Dendritic cell treated with granulocyte-macrophage colony-stimulating factor and Interleukin-4, amounts not matched to agents 40 ng/mL and 50 ng/mL, for 4 days (primary cell): ENCODE measurements at regions of chr5 and their contacts with region 1.

Region 1: DNA sequence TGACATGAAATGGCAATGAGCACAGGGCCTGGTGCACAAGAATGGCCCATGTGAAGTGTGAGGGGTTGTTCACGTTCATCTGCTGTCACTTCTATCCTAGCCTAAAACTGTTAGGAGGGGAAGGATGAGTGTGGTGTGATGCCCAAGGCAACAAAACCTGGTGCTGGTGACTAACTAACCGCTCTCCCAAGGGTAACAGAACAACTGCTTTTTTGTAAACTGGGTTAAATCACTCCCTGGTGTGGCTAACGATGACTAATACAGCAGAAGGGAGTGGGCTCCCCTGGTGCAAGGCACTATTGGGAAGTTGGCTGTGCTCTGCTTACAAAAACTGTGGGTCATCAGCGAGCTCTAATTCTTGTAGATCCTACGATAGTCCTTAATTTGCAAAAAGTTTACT is 103.2 kb upstream of the VCAN start:
- H3K4me3 Mint-ChIP-seq: peak overlapping the region; percentile 11
- H3K27ac Mint-ChIP-seq: peak overlapping the region; percentile 75
- H3K4me1 Mint-ChIP-seq: peaks cover 68% of the 10 kb centered on the region
- H3K27me3 Mint-ChIP-seq: no peaks in the 10 kb centered on the region

Region 2: DNA sequence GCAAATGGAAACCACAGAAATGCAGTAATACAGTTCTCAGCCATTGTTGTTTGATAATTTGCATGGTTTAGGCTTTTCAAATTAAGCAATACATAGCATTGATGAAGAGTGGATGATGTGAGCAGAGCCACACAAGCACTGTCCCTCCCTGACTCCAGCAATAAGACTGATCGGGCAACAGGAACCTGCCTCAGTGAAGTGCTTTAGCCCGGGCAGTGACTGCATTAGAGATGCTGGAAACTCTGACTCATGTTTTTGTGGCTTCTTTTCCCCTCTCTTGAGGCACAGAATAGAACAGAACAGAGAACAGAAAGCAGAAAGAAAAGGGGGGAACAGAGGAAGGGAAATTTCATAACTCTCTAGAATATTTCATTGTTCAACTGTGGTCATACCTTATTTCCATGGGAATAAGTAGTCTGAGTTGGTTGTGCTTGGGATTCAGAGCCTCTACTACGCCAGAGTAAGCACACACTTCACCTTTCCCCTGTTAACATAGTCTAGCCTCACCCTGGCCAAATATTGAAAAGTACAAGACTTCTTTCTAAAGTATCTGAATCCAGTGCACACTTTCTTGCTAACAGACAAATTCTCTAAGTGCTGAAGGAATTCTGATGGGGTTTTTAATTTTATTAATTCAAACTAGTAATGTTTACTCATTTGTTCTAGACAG is 61.6 kb before region 1 on chr5:
- intact Hi-C with region 1: loop called (anchors 5 kb)
- H3K4me3 Mint-ChIP-seq: no peak overlapping the region
- H3K27ac Mint-ChIP-seq: peak overlapping the region; percentile 65
- H3K4me1 Mint-ChIP-seq: peaks cover 16% of the 10 kb centered on the region
- H3K27me3 Mint-ChIP-seq: no peaks in the 10 kb centered on the region

Region 3: DNA sequence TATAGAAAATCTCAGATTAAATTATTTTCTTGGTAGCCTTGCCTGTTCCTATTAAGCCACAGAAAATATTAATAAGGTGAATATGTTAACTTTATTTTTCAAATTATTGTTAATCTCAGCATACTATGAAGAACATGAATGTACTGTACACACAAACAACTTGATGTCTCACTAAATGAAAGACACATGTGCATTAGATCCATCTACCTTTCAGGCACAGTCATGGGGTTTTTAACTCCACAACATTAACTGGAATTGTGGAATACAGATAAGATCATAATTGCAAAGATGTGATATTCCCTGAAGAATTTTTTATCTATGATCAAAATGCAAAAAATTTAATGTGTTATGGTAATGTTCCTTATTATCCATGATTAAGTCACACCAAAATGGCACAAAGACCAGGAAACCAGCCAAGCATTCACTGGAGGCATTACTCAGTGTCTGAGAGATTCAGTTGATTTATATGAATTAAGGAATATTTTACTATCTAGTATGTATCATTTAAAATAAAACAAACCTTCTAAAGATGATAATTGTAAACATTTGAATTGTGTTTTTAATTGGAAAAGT is 46.8 kb before region 1 on chr5:
- intact Hi-C with region 1: loop called (anchors 5 kb)
- H3K4me3 Mint-ChIP-seq: no peak overlapping the region
- H3K27ac Mint-ChIP-seq: no peak overlapping the region
- H3K4me1 Mint-ChIP-seq: peaks cover 15% of the 10 kb centered on the region
- H3K27me3 Mint-ChIP-seq: no peaks in the 10 kb centered on the region

Region 4: DNA sequence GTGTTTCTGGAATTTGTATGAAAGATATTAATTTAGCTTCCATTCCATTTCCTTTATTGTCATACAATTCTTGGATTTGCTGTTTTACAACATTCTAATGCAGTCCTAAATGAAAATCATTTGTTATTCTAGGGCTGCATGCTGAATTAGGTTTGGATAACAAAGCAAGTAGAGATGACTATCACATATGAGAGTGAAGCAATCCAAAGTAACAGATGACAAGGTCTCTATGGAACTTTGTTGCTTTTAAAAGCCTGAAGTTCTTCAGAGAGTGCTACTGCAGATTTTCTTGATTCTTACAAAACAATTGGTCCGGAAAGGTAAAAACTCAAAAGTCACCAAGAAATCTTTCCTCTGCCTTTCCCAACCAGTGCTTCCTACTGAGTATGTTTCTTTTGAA is 46.3 kb after region 1 on chr5:
- intact Hi-C with region 1: loop called (anchors 5 kb)
- H3K4me3 Mint-ChIP-seq: no peak overlapping the region
- H3K27ac Mint-ChIP-seq: no peak overlapping the region
- H3K4me1 Mint-ChIP-seq: peaks cover 27% of the 10 kb centered on the region
- H3K27me3 Mint-ChIP-seq: no peaks in the 10 kb centered on the region